Activated T-helper 2 cell treated with anti-CD3 and anti-CD28 coated beads, Interferon-gamma antibody, Interleukin-2, Interleukin-4, amounts not matched to agents 10 μg/mL and 5 μg/mL and 100 μg/mL, durations not matched to agents 14 hours and 24 hours and 36 hours (primary cell): ENCODE measurements at regions of chr22 and their contacts with region 1.

Region 1: GRCh38 chr22:23709107-23709506 is 18.3 kb downstream of the RGL4 start:
- DNase-seq: no peak
- H3K4me3 Mint-ChIP-seq: no peak overlapping the region
- H3K27ac Mint-ChIP-seq: peak overlapping the region; percentile 65
- H3K4me1 Mint-ChIP-seq: peaks cover 64% of the 10 kb centered on the region
- H3K27me3 Mint-ChIP-seq: no peaks in the 10 kb centered on the region

Region 2: DNA sequence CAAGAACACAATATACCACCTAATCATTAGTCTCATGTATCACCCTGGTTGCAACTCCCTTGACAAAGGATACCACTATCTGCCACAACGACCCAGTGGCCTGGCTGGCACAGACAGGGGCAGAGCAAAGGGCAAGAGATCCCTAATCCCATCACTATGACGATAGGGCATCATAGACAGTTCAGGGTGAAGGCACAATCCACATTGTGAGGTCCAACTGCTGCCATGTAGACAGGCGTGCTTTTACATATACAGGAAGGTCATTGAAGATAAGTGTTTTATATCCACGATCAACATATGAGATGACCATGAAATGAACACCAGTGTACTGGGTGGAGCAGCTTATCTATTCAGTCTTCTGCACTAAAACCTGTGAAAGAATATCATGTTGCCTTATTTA is 223.6 kb before region 1 on chr22:
- intact Hi-C with region 1: no loop called
- DNase-seq: no peak
- H3K4me3 Mint-ChIP-seq: no peak overlapping the region
- H3K27ac Mint-ChIP-seq: no peak overlapping the region
- H3K4me1 Mint-ChIP-seq: peaks cover 5% of the 10 kb centered on the region
- H3K27me3 Mint-ChIP-seq: peaks cover 28% of the 10 kb centered on the region

Region 3: DNA sequence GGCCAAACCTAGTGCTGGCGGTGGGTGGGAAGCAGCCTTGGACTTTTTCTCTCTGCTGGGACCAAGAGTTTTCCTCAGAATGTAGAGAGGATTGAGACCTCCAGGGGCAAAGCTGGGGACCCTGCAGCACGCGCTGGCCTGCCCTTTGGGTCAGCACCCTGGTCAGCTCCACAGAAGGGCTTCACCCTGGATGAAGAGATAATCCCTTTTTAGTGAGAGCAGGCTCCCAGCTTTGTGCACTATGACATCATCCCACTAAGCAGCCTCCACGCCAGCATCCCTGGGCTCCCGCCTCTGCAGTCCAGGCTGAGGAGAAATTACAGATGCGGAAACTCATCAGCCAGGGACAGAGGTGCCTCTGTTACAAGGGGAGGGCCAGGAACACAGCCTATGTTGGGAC is 100.5 kb before region 1 on chr22:
- intact Hi-C with region 1: no loop called
- DNase-seq: no peak
- H3K4me3 Mint-ChIP-seq: no peak overlapping the region
- H3K27ac Mint-ChIP-seq: no peak overlapping the region
- H3K4me1 Mint-ChIP-seq: peaks cover 18% of the 10 kb centered on the region
- H3K27me3 Mint-ChIP-seq: no peaks in the 10 kb centered on the region

Region 4: DNA sequence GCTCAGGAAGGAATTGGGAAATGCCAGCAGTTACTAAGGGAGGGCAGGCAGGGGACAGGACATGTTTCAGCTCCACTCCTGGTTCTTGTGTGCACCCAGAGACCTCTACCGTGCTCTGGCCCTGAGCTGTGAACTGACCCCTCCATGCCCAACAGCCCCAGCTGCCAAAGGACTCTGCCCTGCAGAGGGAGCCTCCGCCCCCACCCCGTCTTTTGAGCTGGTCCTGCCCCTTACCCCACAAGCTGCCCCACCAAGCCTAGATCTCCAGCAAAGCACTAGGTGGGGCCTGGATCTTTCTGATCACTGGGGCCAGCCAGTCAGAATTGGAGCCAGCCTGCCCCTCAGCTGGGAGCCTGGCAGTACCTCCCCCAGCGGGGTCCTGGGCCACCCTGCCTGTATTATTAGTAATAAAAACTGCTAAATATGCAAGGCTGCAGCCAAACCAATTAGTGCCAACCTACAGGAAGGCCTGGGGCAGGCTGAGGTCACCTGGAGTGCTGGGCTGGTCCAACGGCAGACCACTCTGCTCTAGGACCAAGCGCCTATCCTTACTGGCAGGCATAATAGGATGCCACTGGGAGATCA is 53.1 kb before region 1 on chr22:
- intact Hi-C with region 1: no loop called
- DNase-seq: no peak
- H3K4me3 Mint-ChIP-seq: no peak overlapping the region
- H3K27ac Mint-ChIP-seq: no peak overlapping the region
- H3K4me1 Mint-ChIP-seq: no peaks in the 10 kb centered on the region
- H3K27me3 Mint-ChIP-seq: no peaks in the 10 kb centered on the region

Region 5: DNA sequence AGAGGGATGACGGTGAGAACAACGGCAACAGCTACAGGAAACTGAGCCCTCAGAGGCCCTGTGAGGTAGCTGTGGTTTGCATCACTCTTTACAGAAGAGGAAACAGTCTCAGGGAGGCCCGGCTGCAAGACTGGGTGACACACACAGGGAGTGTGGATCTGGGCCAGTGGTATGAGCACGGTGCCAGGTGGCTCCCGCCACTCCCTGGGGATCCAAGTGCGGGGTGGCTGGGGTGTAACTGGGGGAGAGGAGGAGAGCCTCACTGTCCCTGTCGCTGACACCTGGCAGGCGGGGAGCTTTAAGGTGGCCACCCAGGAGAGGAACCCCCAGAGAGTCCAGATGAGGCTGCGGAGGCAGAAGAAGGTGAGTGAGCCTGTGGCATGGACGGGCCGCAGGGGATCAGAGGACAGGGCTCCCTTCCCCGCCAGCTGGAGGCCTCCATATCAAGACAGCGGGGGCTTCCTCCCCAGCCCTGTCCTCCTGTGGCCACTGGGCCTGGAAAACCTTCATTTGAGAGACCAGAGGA is 12.7 kb before region 1 on chr22:
- intact Hi-C with region 1: loop called (anchors 1 kb)
- DNase-seq: peak; percentile 78
- H3K4me3 Mint-ChIP-seq: peak overlapping the region; percentile 89
- H3K27ac Mint-ChIP-seq: peak overlapping the region; percentile 99
- H3K4me1 Mint-ChIP-seq: peaks cover 36% of the 10 kb centered on the region
- H3K27me3 Mint-ChIP-seq: no peaks in the 10 kb centered on the region

Region 6: GRCh38 chr22:23750714-23751440 is 41.8 kb after region 1 on chr22 and contains the start of gene ZNF70:
- intact Hi-C with region 1: loop called (anchors 5 kb)
- DNase-seq: peak; percentile 77
- H3K4me3 Mint-ChIP-seq: peak within 1 kb of the TSS; percentile 82
- H3K27ac Mint-ChIP-seq: no peak within 1 kb of the TSS
- H3K4me1 Mint-ChIP-seq: peaks cover 15% of the 10 kb centered on the region
- H3K27me3 Mint-ChIP-seq: no peaks in the 10 kb centered on the region
- total RNA-seq, gene ZNF70: 2.7 and 2.9 TPM in 2 replicates

Region 7: DNA sequence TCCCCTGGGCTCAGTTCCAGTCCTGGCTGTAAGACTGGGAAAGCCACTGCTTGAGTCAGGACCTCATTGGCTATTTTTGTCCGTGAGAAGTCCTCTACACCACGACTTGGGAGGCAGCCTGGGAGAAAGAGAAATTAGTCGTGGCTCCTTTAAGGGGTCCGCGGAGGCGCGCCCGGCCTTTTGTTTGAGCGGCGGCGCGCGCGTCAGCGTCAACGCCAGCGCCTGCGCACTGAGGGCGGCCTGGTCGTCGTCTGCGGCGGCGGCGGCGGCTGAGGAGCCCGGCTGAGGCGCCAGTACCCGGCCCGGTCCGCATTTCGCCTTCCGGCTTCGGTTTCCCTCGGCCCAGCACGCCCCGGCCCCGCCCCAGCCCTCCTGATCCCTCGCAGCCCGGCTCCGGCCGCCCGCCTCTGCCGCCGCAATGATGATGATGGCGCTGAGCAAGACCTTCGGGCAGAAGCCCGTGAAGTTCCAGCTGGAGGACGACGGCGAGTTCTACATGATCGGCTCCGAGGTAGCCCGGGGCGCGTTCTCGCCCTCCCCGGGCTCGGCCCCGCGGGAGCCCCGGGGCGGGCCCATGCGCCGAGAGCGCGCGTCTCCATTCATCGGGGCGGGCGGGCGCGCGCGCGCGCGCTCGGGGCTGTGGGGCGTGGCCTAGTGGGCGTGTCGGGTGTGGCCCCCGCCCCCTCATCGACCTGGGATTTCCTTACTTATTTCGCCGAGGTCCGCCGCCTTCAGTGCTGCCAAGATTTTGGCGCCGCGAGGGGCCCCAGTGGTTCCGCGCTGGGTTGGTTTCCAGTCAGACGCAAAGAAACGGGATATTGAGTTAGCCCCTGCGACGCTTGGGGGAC is 77.9 kb after region 1 on chr22 and contains the start of gene SMARCB1:
- intact Hi-C with region 1: loop called (anchors 5 kb)
- DNase-seq: peak; percentile 82
- H3K4me3 Mint-ChIP-seq: peak within 1 kb of the TSS; percentile 89
- H3K27ac Mint-ChIP-seq: peak within 1 kb of the TSS; percentile 92
- H3K4me1 Mint-ChIP-seq: peaks cover 26% of the 10 kb centered on the region
- H3K27me3 Mint-ChIP-seq: no peaks in the 10 kb centered on the region
- total RNA-seq, gene SMARCB1: 94.1 and 96.4 TPM in 2 replicates

Region 8: DNA sequence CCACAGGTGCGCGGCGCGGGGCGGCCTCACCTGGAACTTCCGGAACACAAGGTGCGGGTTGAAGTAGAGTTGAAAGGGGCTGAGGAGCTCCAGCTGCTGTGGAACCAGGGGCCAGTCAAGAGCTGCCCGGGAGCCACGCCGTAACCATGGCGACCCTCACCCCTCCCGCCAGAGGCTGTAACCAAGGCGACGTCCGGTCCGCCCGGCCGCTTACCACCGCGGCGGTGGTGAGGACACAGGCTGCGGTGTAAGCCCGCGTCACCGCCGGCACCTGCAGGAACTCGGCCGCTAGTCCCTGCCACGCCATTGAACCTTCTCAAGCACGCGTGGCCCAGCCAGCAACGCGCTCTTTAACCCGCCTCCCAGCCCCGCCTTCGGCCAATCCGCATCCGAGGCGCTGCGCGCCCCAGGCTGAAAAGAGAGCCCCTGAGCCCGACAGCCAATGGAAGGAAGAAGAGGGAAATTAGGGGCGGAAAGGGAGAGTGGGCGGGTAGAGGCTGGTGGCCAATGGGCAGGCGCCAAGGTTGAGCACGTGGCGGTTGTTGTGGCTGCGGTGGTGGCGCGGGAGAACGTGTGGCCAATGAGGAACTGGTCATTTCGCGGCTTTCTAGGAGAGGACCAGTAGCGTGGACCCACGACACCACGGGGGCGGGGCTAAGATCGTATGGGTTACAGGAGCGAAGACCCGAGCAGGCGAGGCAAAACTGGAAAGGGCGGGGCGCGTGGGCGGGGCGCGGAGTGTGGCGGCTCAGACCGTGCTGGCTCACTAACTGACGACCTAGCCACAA is 129.8 kb after region 1 on chr22 and contains the start of gene DERL3:
- intact Hi-C with region 1: no loop called
- DNase-seq: peak; percentile 99
- H3K4me3 Mint-ChIP-seq: peak within 1 kb of the TSS; percentile 95
- H3K27ac Mint-ChIP-seq: peak within 1 kb of the TSS; percentile 91
- H3K4me1 Mint-ChIP-seq: peaks cover 17% of the 10 kb centered on the region
- H3K27me3 Mint-ChIP-seq: peaks cover 2% of the 10 kb centered on the region
- total RNA-seq, gene DERL3: 10.3 TPM in 2 replicates

Region 9: DNA sequence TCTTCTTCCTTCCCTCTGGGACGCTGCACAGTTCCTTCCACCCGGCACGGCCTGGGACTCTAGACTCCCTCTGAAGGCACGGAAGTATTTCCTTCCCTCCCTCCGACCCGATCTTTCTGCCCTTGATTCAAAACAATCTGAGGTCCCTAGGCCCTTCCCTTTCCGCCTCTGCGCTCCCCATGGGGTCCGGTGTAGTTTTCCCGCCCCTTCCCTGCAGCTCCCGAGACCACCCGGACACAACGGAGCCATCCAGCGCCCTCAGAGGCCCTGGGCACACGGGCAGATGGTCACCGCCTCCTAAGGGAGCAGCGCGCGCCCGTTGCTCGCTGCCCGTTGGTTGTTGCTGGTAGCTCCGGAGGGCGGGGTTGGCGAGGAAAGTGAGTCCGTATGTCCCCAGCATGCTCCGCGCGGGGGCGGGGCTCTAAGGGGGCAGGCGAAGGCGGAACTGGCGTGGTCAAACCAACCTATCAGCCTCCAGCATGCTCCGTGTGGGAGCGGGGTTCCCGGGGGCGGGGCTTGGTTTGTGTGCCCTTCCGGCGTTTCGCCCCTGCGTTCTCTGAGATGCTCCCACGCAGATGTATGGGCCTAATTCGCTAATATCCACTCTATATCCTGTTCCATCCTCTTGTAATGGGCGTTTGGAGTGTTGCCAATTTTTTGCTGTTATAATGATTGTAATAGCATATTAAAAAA is 204.7 kb after region 1 on chr22:
- intact Hi-C with region 1: loop called (anchors 5 kb)
- DNase-seq: peak; percentile 100
- H3K4me3 Mint-ChIP-seq: peak overlapping the region; percentile 98
- H3K27ac Mint-ChIP-seq: peak overlapping the region; percentile 99
- H3K4me1 Mint-ChIP-seq: peaks cover 24% of the 10 kb centered on the region
- H3K27me3 Mint-ChIP-seq: peaks cover 3% of the 10 kb centered on the region